GM13977 (cell line): ENCODE measurements at regions of chr9 and their contacts with region 1.

Region 1: GRCh38 chr9:121317742-121318489 is 50.0 kb downstream of the GSN start:
- DNase-seq: no peak
- CTCF ChIP-seq: no peak

Region 2: GRCh38 chr9:121369595-121370265 is 51.8 kb after region 1 on chr9 and contains the start of gene STOM:
- in situ Hi-C with region 1: loop called (anchors 10 kb)
- DNase-seq: peak; percentile 65
- CTCF ChIP-seq: no peak

Region 3: DNA sequence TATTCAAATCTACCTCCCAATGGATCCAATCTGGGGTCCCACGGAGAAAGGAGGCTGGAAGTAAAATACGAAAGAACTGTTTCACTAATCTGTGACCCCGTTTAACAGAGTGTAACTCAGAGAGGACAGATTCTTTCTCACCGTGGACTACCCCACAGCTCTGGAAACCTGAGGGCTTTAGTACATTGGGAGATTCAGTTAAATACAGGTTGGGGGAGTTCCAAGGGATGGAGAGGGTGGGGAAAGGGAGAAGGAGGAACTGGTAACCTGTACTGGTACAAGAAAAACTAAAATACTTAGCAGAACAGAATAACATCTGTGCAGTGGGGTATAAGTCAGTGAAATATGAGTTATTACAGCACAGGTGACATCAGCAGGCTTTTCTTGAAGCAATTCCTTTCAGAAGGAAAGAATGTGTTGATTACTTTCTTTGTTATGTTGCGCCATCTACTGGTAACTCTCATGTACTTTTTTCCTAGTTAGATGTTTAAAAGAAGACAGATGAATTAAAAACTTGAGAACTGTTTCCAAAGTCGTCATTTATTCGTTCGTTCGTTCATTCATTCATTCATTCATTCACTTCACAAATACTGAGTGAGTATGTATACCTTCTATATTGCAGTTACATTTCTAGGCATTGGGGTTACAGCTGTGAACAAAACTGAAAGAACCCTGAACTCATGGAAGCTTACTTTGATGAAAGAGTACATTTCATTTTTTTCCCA is 82.1 kb after region 1 on chr9:
- in situ Hi-C with region 1: loop called (anchors 5 kb)
- DNase-seq: peak; percentile 37
- CTCF ChIP-seq: peak; percentile 57

Region 4: GRCh38 chr9:121598965-121599871 is 281.3 kb after region 1 on chr9:
- in situ Hi-C with region 1: no loop called
- DNase-seq: peak; percentile 58
- CTCF ChIP-seq: no peak